AG04450 (cell line): ENCODE measurements at regions of chr6 and their contacts with region 1.

Region 1: DNA sequence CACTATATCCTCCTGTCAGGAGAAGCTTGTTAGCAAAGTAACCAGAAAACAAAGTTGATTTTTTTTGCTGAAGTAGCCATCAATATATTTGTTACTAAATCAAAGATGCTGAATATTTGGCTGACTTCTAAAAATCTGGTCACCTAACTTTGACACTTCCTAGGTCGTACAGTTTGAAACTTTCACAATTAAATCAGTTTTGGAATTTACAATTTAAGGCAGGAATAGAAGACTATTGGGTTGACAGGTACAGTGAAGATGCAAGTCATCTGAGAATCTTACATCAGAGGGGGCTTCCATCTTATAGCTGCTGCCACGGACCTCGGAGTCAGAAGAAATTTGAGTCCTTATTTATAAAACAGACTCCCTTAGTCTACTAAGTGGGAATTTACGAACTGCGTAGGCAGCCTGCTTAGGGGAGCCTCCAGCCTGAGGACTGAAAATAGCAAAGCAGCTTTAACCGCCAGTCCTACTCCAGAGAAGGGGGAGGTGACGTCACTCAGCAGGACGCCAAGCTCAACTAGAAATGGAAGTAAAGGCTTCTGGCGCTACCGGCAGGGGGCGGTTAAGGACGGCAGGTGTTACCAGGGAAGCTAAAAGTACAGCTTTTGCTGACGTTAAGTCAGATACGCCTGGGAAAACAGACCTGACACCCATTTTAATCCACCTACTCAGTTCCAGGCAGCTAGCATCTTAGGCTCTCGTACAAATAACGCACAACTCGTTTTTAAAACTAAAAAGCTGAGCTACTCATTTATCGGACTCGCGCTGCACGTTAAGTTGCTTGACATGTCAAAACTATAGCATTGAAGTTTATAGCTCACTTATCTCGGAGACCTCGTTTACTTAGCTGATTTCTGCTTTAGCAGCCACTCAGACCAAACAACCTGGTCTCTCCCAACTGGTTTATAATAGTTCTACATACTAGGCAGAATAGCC is 61.1 kb upstream of the HFE start:
- DNase-seq: peak; percentile 94
- H3K4me3 ChIP-seq: peak overlapping the region; percentile 78
- H3K27ac ChIP-seq: peak overlapping the region; percentile 91
- H3K27me3 ChIP-seq: no peaks in the 10 kb centered on the region
- CTCF ChIP-seq: peak; percentile 93

Region 2: DNA sequence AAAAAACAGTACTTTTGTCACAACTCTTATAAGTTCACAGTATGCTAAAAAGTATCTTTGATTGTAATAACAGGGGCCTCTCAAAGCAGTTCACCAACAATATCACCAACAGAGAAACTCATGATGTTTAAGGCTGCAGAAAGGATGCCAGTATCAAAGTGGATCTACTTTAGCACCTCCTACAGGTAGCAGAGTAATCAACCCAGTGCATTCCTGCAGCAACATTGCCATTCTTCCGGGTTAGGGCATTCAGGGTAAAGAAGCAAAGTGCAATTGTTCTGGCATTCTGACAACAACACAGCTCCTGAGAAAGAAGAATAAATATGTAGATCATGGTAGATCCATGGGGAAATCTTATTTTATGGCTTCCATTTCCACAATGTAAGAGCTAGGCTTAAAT is 279.2 kb before region 1 on chr6:
- CTCF ChIA-PET with region 1: no interaction called
- POLR2A ChIA-PET with region 1: no interaction called
- DNase-seq: no peak
- H3K4me3 ChIP-seq: no peak overlapping the region
- H3K27ac ChIP-seq: no peak overlapping the region
- H3K27me3 ChIP-seq: no peaks in the 10 kb centered on the region
- CTCF ChIP-seq: no peak

Region 3: GRCh38 chr6:25816252-25816651 is 209.9 kb before region 1 on chr6:
- CTCF ChIA-PET with region 1: no interaction called
- POLR2A ChIA-PET with region 1: no interaction called
- DNase-seq: no peak
- H3K4me3 ChIP-seq: no peak overlapping the region
- H3K27ac ChIP-seq: no peak overlapping the region
- H3K27me3 ChIP-seq: no peaks in the 10 kb centered on the region
- CTCF ChIP-seq: no peak

Region 4: GRCh38 chr6:25902071-25902470 is 124.1 kb before region 1 on chr6:
- CTCF ChIA-PET with region 1: no interaction called
- POLR2A ChIA-PET with region 1: no interaction called
- DNase-seq: no peak
- H3K4me3 ChIP-seq: no peak overlapping the region
- H3K27ac ChIP-seq: no peak overlapping the region
- H3K27me3 ChIP-seq: peaks cover 2% of the 10 kb centered on the region
- CTCF ChIP-seq: no peak

Region 5: GRCh38 chr6:25992413-25993037 is 33.6 kb before region 1 on chr6:
- CTCF ChIA-PET with region 1: interaction called, 14 read pairs
- POLR2A ChIA-PET with region 1: interaction called, 23 read pairs
- DNase-seq: peak; percentile 81
- H3K4me3 ChIP-seq: peak overlapping the region; percentile 70
- H3K27ac ChIP-seq: peak overlapping the region; percentile 83
- H3K27me3 ChIP-seq: no peaks in the 10 kb centered on the region
- CTCF ChIP-seq: peak; percentile 94

Region 6: DNA sequence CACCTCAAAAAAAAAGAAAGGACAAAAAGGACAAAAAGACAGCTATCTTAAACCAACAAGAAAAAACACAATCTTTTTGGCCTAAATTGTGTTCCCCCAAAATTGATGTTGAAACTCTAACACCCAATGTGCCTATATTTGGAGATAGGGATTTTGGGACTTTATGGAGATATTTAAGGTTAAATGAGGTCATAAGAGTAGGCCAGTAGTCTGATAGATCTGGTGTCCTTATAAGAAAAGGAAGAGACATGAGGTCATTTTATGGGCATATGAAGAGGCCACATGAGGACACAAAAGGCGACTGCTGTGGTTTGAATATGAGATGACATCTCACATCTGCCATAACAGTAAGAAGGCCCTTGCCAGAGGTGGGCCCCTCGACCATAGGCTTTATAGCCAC is 14.1 kb before region 1 on chr6:
- CTCF ChIA-PET with region 1: interaction called, 43 read pairs
- POLR2A ChIA-PET with region 1: interaction called, 33 read pairs
- DNase-seq: no peak
- H3K4me3 ChIP-seq: no peak overlapping the region
- H3K27ac ChIP-seq: no peak overlapping the region
- H3K27me3 ChIP-seq: no peaks in the 10 kb centered on the region
- CTCF ChIP-seq: no peak

Region 7: DNA sequence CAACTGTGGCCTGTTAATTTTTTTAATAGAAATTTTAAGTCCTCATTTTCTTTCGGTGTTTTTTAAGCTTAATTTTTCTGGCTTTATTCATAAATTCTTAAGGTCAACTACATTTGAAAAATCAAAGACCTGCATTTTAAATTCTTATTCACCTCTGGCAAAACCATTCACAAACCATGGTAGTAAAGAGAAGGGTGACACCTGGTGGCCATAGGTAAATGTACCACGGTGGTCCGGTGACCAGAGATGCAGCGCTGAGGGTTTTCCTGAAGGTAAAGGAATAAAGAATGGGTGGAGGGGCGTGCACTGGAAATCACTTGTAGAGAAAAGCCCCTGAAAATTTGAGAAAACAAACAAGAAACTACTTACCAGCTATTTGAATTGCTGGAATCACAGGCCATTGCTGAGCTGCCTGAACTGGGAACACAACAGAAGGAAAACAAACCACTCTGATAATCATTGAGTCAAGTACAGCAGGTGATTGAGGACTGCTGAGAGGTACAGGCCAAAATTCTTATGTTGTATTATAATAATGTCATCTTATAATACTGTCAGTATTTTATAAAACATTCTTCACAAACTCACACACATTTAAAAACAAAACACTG is 71.2 kb after region 1 on chr6:
- CTCF ChIA-PET with region 1: interaction called, 22 read pairs
- POLR2A ChIA-PET with region 1: no interaction called
- DNase-seq: no peak
- H3K4me3 ChIP-seq: no peak overlapping the region
- H3K27ac ChIP-seq: no peak overlapping the region
- H3K27me3 ChIP-seq: no peaks in the 10 kb centered on the region
- CTCF ChIP-seq: peak; percentile 69

Region 8: DNA sequence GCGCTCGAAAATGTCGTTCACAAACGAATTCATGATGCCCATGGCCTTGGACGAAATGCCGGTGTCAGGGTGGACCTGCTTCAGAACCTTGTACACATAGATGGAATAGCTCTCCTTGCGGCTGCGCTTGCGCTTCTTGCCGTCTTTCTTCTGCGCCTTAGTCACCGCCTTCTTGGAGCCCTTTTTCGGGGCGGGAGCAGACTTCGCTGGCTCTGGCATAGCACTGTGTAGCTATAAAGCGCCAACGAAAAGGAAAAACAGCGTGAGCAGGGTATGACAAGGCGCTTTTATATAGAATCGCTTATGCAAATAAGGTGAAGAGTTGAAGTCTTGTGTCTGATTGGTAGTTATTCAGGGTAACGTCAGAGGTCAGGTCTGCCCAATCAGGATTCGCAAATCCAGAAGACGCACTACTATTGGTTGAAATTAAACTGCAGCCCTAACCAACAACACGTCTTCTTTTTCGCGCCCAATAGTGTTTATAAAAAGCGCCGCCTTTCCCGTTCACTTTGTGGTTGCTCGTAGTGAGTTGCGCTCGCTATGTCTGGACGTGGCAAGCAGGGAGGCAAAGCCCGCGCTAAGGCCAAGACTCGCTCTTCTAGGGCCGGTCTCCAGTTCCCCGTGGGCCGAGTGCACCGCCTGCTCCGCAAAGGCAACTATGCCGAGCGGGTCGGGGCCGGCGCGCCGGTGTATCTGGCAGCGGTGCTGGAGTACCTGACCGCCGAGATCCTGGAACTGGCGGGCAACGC is 1106.5 kb after region 1 on chr6:
- CTCF ChIA-PET with region 1: interaction called, 4 read pairs
- POLR2A ChIA-PET with region 1: interaction called, 24 read pairs
- DNase-seq: peak; percentile 100
- H3K4me3 ChIP-seq: peak overlapping the region; percentile 70
- H3K27ac ChIP-seq: peak overlapping the region; percentile 96
- H3K27me3 ChIP-seq: no peaks in the 10 kb centered on the region
- CTCF ChIP-seq: no peak

Region 9: DNA sequence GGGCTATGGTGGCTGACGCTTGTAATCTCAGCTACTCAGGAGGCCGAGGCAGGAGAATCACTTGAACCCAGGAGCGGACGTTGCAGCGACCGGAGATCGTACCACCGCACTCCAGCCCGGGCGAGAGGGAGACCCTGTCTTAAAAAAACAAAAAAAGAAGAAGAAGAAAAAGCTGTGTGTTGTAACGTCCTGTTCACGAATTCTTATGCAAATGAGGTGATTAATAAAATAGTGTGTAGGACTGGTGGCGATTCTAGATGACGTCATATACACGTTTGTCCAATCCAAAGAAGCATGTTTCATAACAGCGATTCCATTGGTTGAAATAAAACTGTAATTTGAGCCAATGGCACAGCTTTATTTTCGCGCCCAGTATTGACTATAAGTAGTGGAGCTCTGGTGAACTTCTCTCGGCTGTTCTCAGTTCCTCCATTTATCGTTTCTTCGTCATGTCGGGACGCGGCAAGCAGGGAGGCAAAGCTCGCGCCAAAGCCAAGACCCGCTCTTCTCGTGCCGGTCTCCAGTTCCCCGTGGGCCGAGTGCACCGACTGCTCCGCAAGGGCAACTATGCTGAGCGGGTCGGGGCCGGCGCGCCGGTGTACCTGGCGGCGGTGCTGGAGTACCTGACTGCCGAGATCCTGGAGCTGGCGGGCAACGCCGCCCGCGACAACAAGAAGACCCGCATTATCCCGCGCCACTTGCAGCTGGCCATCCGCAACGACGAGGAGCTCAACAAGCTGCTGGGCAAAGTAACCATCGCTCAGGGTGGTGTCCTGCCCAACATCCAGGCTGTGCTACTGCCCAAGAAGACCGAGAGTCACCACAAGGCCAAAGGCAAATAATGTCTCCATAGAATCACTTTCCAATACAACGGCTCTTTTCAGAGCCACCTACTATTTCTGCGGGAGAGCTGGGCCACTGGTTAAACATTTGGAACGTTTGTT is 1839.0 kb after region 1 on chr6:
- CTCF ChIA-PET with region 1: no interaction called
- POLR2A ChIA-PET with region 1: interaction called, 11 read pairs
- DNase-seq: peak; percentile 94
- H3K4me3 ChIP-seq: peak overlapping the region; percentile 75
- H3K27ac ChIP-seq: peak overlapping the region; percentile 96
- H3K27me3 ChIP-seq: no peaks in the 10 kb centered on the region
- CTCF ChIP-seq: no peak